ENCODE measurements at regions of chr2 and their contacts with region 1.

Region 1: DNA sequence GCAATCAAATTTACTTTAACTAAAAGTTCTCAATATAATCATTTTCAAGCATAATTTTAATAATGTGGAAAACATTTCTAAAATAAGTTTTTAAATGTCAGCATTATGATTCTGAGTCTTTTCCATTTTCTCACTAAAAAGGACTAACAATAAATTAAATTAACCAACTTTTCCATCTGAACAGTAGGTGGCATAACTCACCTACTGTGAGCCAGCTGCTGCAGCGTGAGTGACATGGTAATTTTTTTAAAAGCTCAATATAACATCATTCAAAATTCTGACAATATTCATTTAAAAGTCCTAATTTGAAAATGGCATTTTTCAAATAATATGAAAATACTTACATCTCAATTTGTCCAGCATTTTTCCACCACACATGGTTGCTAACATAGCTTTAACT is 66.5 kb downstream of the DTNB start:
- DNase-seq: peak in 1 of 35 experiments; percentile 57
- ATAC-seq: no peak
- H3K4me3 ChIP-seq: no peak overlapping the region
- H3K4me3 Mint-ChIP-seq: no peak overlapping the region
- H3K27ac ChIP-seq: no peak overlapping the region
- H3K27ac Mint-ChIP-seq: no peak overlapping the region
- H3K4me1 ChIP-seq: no peaks in the 10 kb centered on the region
- H3K4me1 Mint-ChIP-seq: peaks cover 0 to 6% (median 5%) of the 10 kb centered on the region in 3 donors
- H3K27me3 ChIP-seq: no peaks in the 10 kb centered on the region
- H3K27me3 Mint-ChIP-seq: no peaks in the 10 kb centered on the region

Region 2: GRCh38 chr2:25323042-25323514 is 283.8 kb before region 1 on chr2:
- CTCF ChIA-PET with region 1: no interaction called
- POLR2A ChIA-PET with region 1: no interaction called
- DNase-seq: peak in 30 of 35 experiments; percentile 28 to 72 (median 46)
- ATAC-seq: peak; percentile 43 to 72 (median 60)
- H3K4me3 ChIP-seq: peak overlapping the region in 1 of 2 donors; percentile 49
- H3K4me3 Mint-ChIP-seq: peak overlapping the region; percentile 70 to 79 (median 71)
- H3K27ac ChIP-seq: peak overlapping the region; percentile 36
- H3K27ac Mint-ChIP-seq: peak overlapping the region; percentile 87 to 90
- H3K4me1 ChIP-seq: peaks cover 0 to 33% of the 10 kb centered on the region in 2 experiments
- H3K4me1 Mint-ChIP-seq: peaks cover 53 to 61% (median 56%) of the 10 kb centered on the region in 3 donors
- H3K27me3 ChIP-seq: no peaks in the 10 kb centered on the region
- H3K27me3 Mint-ChIP-seq: no peaks in the 10 kb centered on the region

Region 3: DNA sequence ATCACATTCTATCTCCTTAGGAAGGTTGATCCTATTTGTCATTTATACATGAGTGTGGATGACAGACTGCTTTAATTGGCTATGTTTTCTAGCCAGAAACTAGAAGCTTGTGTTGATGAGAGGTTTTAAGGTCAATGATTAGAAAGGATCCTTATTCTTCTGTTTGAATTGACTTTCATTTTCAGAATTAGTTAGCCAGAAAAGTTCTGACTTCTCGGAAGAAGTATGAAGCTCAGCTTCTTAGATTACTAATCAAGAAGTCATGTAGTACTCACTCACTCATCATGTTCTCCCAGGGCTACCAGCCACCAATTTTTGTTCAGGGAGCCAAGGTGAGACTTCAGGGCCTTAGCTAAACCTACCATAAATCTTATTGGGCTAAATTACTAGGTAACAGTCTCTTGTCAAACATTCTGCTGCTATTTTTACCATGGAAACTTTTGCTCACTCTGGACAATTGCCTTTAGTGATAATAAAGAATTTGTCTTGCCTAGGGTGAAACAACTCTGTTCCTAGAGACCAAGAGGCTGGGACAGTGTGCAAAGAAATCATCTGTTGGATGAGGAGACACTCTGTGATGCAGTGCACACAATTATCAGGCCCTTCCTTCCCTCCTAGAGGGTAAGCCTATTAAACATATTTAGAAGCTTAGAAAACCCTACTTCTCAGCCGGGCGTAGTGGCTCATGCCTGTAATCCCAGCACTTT is 153.5 kb before region 1 on chr2:
- CTCF ChIA-PET with region 1: no interaction called
- POLR2A ChIA-PET with region 1: no interaction called
- DNase-seq: no peak
- ATAC-seq: no peak
- H3K4me3 ChIP-seq: no peak overlapping the region
- H3K4me3 Mint-ChIP-seq: no peak overlapping the region
- H3K27ac ChIP-seq: no peak overlapping the region
- H3K27ac Mint-ChIP-seq: no peak overlapping the region
- H3K4me1 ChIP-seq: no peaks in the 10 kb centered on the region
- H3K4me1 Mint-ChIP-seq: peaks cover 0 to 4% (median 1%) of the 10 kb centered on the region in 3 donors
- H3K27me3 ChIP-seq: no peaks in the 10 kb centered on the region
- H3K27me3 Mint-ChIP-seq: no peaks in the 10 kb centered on the region

Region 4: DNA sequence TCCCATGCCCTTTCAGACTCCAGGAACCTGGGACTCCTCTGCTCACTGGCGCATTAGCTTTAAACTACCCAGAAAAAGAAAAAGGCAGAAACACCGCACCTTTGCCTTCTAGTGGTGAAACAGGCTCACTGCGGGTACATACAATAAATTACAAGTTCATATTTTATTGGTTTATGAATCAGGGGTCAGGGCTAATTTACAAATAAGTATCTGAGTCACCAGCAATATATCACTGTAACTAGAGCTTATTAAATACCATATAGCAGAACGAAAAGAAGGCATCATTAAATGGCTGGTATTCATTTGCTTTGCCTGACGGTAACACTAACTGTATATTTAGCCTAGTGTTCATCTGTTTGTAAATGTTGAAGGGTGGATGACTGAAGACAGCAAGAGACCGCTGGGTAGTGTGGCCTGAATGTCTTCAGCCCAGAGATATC is 93.3 kb after region 1 on chr2:
- CTCF ChIA-PET with region 1: interaction called, 5 to 57 read pairs
- POLR2A ChIA-PET with region 1: no interaction called
- DNase-seq: peak in 18 of 35 experiments; percentile 4 to 55 (median 12)
- ATAC-seq: peak; percentile 45 to 56 (median 46)
- H3K4me3 ChIP-seq: no peak overlapping the region
- H3K4me3 Mint-ChIP-seq: no peak overlapping the region
- H3K27ac ChIP-seq: no peak overlapping the region
- H3K27ac Mint-ChIP-seq: no peak overlapping the region
- H3K4me1 ChIP-seq: no peaks in the 10 kb centered on the region
- H3K4me1 Mint-ChIP-seq: peaks cover 0 to 4% (median 3%) of the 10 kb centered on the region in 3 donors
- H3K27me3 ChIP-seq: peaks cover 0 to 4% of the 10 kb centered on the region in 2 experiments
- H3K27me3 Mint-ChIP-seq: no peaks in the 10 kb centered on the region

Region 5: DNA sequence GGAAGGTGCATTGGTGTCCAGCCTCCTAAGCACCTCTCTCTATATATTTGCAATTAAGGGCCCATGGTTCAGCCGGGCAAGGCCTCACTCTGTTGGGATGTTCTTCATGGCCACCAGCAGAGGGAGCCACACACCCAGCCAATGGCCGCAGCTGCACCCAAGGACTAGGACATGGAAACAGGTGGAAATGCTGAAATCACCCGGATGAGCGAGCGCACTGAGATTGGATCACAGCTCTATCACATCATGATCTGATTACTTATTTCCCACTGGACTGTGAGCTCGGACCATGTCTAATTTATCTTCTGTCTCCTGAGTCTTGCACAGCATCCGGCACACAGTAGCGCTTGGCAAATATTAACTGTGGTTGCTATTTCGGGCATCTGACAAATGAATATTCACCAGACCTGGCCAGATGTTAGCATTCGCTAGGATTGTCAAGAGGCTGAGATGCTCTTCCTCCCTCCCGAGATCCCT is 344.2 kb after region 1 on chr2:
- CTCF ChIA-PET with region 1: interaction called in 1 of 2 experiments, 11 read pairs
- POLR2A ChIA-PET with region 1: no interaction called
- DNase-seq: peak; percentile 35 to 85 (median 65)
- ATAC-seq: peak; percentile 85 to 94 (median 88)
- H3K4me3 ChIP-seq: no peak overlapping the region
- H3K4me3 Mint-ChIP-seq: no peak overlapping the region
- H3K27ac ChIP-seq: no peak overlapping the region
- H3K27ac Mint-ChIP-seq: no peak overlapping the region
- H3K4me1 ChIP-seq: no peaks in the 10 kb centered on the region
- H3K4me1 Mint-ChIP-seq: peaks cover 0 to 2% (median 0%) of the 10 kb centered on the region in 3 donors
- H3K27me3 ChIP-seq: no peaks in the 10 kb centered on the region
- H3K27me3 Mint-ChIP-seq: no peaks in the 10 kb centered on the region

Region 6: GRCh38 chr2:26157580-26157979 is 550.7 kb after region 1 on chr2:
- CTCF ChIA-PET with region 1: no interaction called
- POLR2A ChIA-PET with region 1: no interaction called
- DNase-seq: no peak
- ATAC-seq: no peak
- H3K4me3 ChIP-seq: no peak overlapping the region
- H3K4me3 Mint-ChIP-seq: no peak overlapping the region
- H3K27ac ChIP-seq: no peak overlapping the region
- H3K27ac Mint-ChIP-seq: no peak overlapping the region
- H3K4me1 ChIP-seq: no peaks in the 10 kb centered on the region
- H3K4me1 Mint-ChIP-seq: no peaks in the 10 kb centered on the region
- H3K27me3 ChIP-seq: no peaks in the 10 kb centered on the region
- H3K27me3 Mint-ChIP-seq: peaks cover 3 to 8% of the 10 kb centered on the region in 2 donors

Measured in T-cell (primary cell).